ENCODE measurements at regions of chr14 and their contacts with region 1.

Region 1: DNA sequence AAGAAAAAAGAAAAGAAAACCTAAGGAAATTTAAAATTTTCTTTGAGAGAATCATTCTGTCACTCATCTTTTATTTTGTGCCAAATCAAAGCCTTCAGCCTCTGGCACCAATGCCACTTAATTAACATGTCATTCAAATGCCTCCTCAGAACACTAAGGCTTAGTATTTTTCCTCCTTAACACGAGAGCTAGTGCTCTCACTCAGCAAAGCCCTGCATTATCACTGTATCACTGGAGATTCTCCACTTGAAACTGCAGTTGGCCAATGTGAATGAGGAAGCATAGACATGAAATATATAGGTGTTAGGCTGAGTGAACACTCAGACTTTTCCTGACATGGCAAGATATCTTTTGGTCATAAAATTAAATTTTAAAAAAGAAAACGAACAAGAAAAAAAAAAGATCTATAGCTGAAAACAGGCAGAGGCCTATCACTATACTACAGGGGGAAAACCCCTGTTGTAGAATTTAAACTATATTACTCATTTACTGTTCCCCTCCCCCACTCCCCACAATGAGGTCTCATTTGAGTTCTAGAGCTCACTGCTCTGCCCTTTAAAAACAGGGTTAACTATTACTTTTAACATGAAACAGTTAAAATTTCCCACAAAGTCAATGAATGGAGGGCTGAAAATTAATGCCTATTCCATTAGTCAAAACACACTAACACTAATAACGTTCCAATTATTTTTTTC is 5.1 kb downstream of the MBIP start:
- DNase-seq: peak; percentile 80
- H3K4me3 Mint-ChIP-seq: peak overlapping the region; percentile 43
- H3K27ac Mint-ChIP-seq: peak overlapping the region; percentile 89
- H3K4me1 Mint-ChIP-seq: peaks cover 40% of the 10 kb centered on the region
- H3K27me3 Mint-ChIP-seq: no peaks in the 10 kb centered on the region

Region 2: GRCh38 chr14:34931206-34931605 is 1384.1 kb before region 1 on chr14:
- CTCF ChIA-PET with region 1: no interaction called
- intact Hi-C with region 1: loop called (anchors 5 kb)
- DNase-seq: peak; percentile 56
- H3K4me3 Mint-ChIP-seq: peak overlapping the region; percentile 64
- H3K27ac Mint-ChIP-seq: peak overlapping the region; percentile 93
- H3K4me1 Mint-ChIP-seq: peaks cover 49% of the 10 kb centered on the region
- H3K27me3 Mint-ChIP-seq: no peaks in the 10 kb centered on the region

Region 3: GRCh38 chr14:35808076-35808652 is 507.1 kb before region 1 on chr14:
- CTCF ChIA-PET with region 1: no interaction called
- intact Hi-C with region 1: loop called (anchors 5 kb)
- DNase-seq: peak; percentile 61
- H3K4me3 Mint-ChIP-seq: peak overlapping the region; percentile 98
- H3K27ac Mint-ChIP-seq: peak overlapping the region; percentile 86
- H3K4me1 Mint-ChIP-seq: peaks cover 28% of the 10 kb centered on the region
- H3K27me3 Mint-ChIP-seq: no peaks in the 10 kb centered on the region

Region 4: DNA sequence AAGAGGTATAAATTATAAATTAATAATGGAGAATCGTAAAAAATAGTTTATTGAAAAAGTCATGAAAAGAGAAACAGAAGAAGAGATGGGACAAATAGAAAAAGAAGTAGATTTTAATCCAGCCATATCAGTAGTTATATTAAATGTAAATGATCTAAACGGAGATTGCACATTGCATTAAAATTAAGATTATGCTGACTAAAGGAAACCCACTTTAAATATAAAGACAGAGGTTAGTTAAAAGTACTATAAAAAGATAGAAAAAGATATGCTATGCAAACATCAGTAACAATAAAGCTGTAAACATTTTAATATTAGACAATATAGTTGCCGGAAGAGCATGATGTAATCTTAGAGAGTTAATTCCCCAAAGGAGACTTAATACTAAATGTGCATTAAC is 10.5 kb after region 1 on chr14:
- CTCF ChIA-PET with region 1: no interaction called
- intact Hi-C with region 1: no loop called
- DNase-seq: no peak
- H3K4me3 Mint-ChIP-seq: no peak overlapping the region
- H3K27ac Mint-ChIP-seq: no peak overlapping the region
- H3K4me1 Mint-ChIP-seq: peaks cover 3% of the 10 kb centered on the region
- H3K27me3 Mint-ChIP-seq: peaks cover 26% of the 10 kb centered on the region

Region 5: GRCh38 chr14:36373982-36374673 is 58.8 kb after region 1 on chr14:
- CTCF ChIA-PET with region 1: interaction called, 5 read pairs
- intact Hi-C with region 1: loop called (anchors 1 kb)
- DNase-seq: peak; percentile 87
- H3K4me3 Mint-ChIP-seq: no peak overlapping the region
- H3K27ac Mint-ChIP-seq: no peak overlapping the region
- H3K4me1 Mint-ChIP-seq: no peaks in the 10 kb centered on the region
- H3K27me3 Mint-ChIP-seq: no peaks in the 10 kb centered on the region

Region 6: DNA sequence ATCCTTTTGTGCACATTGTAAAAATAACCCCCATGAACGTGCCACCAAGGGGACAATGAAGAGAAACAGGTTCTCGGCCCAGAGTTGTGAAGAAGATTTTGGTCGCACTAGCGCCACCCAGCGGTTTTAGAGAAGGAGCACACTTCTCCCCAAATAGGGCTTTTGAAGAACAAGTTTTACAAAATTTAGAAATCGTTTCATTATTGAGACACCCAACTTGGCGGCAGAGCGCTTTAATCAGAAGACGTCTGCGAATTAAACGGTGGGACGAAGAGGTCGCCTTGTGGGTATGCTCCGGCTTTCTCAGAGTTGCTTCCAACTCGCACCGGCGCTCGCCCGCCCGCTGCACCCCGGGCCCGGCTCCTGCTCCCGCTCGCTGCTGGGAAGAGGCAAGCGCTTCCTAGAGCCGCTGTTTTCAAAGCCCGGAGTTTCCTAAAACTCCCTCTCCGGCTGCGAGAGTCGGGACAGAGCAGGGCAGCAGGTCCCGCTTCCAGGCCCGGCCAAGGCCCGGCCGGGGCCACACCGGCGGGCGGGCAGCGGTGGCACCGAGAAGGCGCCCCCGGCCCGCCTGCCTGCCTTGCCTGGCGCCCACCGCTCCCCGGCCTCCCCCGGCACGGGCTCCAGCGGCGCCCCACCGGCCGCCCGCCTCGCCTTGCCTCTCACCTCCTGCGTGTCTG is 1279.1 kb after region 1 on chr14:
- CTCF ChIA-PET with region 1: no interaction called
- intact Hi-C with region 1: loop called (anchors 5 kb)
- DNase-seq: peak; percentile 72
- H3K4me3 Mint-ChIP-seq: peak overlapping the region; percentile 53
- H3K27ac Mint-ChIP-seq: peak overlapping the region; percentile 47
- H3K4me1 Mint-ChIP-seq: peaks cover 34% of the 10 kb centered on the region
- H3K27me3 Mint-ChIP-seq: peaks cover 74% of the 10 kb centered on the region